ENCODE measurements at regions of chr1 and their contacts with region 1.

Region 1: GRCh38 chr1:54764133-54764921 is at the start of gene PARS2:
- DNase-seq: peak; percentile 94
- H3K4me3 Mint-ChIP-seq: peak within 1 kb of the TSS; percentile 90
- H3K27ac Mint-ChIP-seq: peak within 1 kb of the TSS; percentile 95
- H3K4me1 Mint-ChIP-seq: peaks cover 32% of the 10 kb centered on the region
- H3K27me3 Mint-ChIP-seq: no peaks in the 10 kb centered on the region
- total RNA-seq, gene PARS2: 5.9 and 6.7 TPM in 2 replicates

Region 2: DNA sequence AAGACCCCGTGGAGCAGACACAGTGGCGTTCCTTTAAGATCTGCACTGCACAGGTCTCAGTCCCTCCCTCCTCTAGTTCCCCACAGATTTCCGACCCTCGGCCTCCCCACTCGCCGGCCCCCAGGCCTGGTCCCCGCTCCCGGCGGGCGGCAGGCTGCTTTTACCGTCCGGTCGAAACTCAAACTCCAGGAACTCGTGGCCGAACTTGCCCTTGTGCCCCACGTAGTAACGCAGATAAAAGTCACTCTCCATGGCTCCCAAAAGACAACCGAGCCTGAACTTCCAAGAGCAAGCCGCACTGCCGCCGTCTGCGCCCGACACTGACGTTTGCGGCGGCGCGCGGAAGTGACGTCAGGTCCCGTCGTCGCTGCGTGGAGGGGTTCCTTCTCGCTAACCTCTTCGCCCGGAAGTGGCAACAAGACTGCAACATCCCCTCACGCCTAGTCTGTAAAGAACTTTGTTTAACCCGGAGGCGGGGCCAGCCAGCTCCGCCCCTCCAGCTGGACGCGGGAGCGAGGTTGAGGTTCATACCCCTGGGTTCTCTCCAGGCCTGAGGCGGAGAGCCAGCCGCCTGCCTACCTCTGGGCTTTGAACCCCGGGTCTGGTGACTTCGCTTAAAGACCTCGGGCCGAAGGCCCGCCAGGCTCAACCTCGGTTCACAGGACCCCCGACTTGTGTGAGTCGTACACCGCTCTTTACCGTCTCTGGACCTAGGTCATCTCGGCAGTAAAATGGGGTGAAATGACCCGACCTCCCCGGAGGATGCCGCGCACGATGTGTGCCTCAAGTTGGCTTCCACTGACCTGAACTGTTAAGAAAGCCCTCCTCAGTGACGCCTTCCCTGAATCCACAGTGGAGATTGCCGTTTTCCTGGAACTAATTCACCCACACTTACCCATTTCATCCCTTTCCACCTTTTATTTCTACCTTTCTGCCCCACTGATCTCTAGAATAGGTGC is 1525.9 kb before region 1 on chr1 and contains the start of gene MAGOH:
- intact Hi-C with region 1: loop called (anchors 1 kb)
- DNase-seq: peak; percentile 93
- H3K4me3 Mint-ChIP-seq: peak within 1 kb of the TSS; percentile 97
- H3K27ac Mint-ChIP-seq: peak within 1 kb of the TSS; percentile 98
- H3K4me1 Mint-ChIP-seq: peaks cover 28% of the 10 kb centered on the region
- H3K27me3 Mint-ChIP-seq: no peaks in the 10 kb centered on the region
- total RNA-seq, gene MAGOH: 104 TPM in 2 replicates

Region 3: DNA sequence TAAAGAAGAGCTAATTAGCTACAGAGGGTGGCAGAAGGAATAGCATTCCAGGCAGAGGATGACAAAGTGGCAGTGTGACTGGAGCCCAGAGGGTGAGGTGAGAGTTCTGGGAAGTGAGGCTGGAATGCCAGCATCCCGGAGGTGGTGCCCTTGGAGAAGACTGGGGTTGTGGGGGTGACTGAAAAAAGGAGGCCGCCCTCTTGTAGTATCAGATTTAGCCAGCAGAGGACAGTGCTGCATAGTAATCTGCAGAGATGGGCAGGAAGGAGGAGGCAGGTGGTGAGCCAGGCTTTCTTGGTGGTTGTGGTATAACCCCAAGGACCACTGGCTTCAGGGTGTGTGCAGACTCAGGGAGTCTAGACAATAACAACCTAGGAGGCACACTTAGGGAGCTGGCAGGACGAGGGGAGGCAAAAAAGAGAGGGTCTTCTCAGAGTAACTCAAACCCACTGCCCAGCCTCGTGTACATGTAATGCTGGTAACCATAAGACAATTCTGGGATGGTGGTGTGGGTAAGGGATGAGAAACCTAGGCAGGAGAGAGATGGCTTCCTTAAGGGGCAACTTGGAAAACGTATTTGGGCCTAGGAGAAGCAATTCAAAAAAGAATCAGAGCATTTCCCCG is 92.2 kb before region 1 on chr1:
- intact Hi-C with region 1: loop called (anchors 1 kb)
- DNase-seq: peak; percentile 59
- H3K4me3 Mint-ChIP-seq: no peak overlapping the region
- H3K27ac Mint-ChIP-seq: no peak overlapping the region
- H3K4me1 Mint-ChIP-seq: no peaks in the 10 kb centered on the region
- H3K27me3 Mint-ChIP-seq: peaks cover 6% of the 10 kb centered on the region

Region 4: GRCh38 chr1:54800899-54801759 is 36.8 kb after region 1 on chr1 and contains the start of gene TTC22:
- intact Hi-C with region 1: loop called (anchors 1 kb)
- DNase-seq: peak; percentile 56
- H3K4me3 Mint-ChIP-seq: peak within 1 kb of the TSS; percentile 85
- H3K27ac Mint-ChIP-seq: peak within 1 kb of the TSS; percentile 80
- H3K4me1 Mint-ChIP-seq: peaks cover 65% of the 10 kb centered on the region
- H3K27me3 Mint-ChIP-seq: no peaks in the 10 kb centered on the region
- total RNA-seq, gene TTC22: 2.2 and 2.3 TPM in 2 replicates

Region 5: GRCh38 chr1:54886724-54887664 is 122.7 kb after region 1 on chr1 and contains the start of gene DHCR24:
- intact Hi-C with region 1: loop called (anchors 1 kb)
- DNase-seq: peak; percentile 85
- H3K4me3 Mint-ChIP-seq: peak within 1 kb of the TSS; percentile 96
- H3K27ac Mint-ChIP-seq: peak within 1 kb of the TSS; percentile 87
- H3K4me1 Mint-ChIP-seq: peaks cover 56% of the 10 kb centered on the region
- H3K27me3 Mint-ChIP-seq: peaks cover 10% of the 10 kb centered on the region
- total RNA-seq, gene DHCR24: 206 and 211 TPM in 2 replicates

Region 6: DNA sequence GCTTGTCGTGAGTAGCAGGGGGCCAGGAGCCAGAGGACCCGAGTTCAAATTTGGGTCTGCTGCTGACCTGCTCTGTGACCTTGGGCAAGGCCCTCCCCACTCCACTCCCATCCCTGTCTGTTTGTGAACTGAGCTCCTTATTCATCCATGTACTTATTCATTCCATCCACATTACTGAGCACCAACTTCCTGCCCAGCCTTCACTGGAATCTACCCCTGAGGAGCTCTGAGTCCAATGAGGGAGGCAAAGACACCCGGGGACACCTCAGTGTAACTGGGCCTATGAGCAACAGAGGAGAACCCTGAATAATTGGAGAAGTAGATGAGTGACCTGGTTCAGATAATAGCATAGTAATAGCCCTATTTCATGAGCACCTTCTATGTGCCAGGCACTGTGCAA is 243.3 kb after region 1 on chr1:
- intact Hi-C with region 1: no loop called
- DNase-seq: no peak
- H3K4me3 Mint-ChIP-seq: no peak overlapping the region
- H3K27ac Mint-ChIP-seq: no peak overlapping the region
- H3K4me1 Mint-ChIP-seq: no peaks in the 10 kb centered on the region
- H3K27me3 Mint-ChIP-seq: peaks cover 2% of the 10 kb centered on the region